Activated B cell treated with CpG ODN at 0.5 μM for 24 hours (primary cell): ENCODE measurements at regions of chr16 and their contacts with region 1.

Region 1: GRCh38 chr16:85821441-85822135 is 22.1 kb downstream of the COX4I1 start:
- DNase-seq: peak; percentile 88
- ATAC-seq: peak; percentile 93
- H3K4me3 Mint-ChIP-seq: no peak overlapping the region
- H3K27ac Mint-ChIP-seq: no peak overlapping the region
- H3K4me1 Mint-ChIP-seq: peaks cover 29% of the 10 kb centered on the region
- H3K27me3 Mint-ChIP-seq: no peaks in the 10 kb centered on the region
- CTCF ChIP-seq: peak; percentile 69

Region 2: GRCh38 chr16:85566561-85567100 is 255.0 kb before region 1 on chr16:
- CTCF ChIA-PET with region 1: no interaction called
- POLR2A ChIA-PET with region 1: no interaction called
- intact Hi-C with region 1: no loop called
- DNase-seq: no peak
- ATAC-seq: no peak
- H3K4me3 Mint-ChIP-seq: no peak overlapping the region
- H3K27ac Mint-ChIP-seq: no peak overlapping the region
- H3K4me1 Mint-ChIP-seq: peaks cover 74% of the 10 kb centered on the region
- H3K27me3 Mint-ChIP-seq: no peaks in the 10 kb centered on the region
- CTCF ChIP-seq: no peak

Region 3: GRCh38 chr16:85659805-85660495 is 161.6 kb before region 1 on chr16:
- CTCF ChIA-PET with region 1: interaction called, 10 read pairs
- POLR2A ChIA-PET with region 1: no interaction called
- intact Hi-C with region 1: no loop called
- DNase-seq: peak; percentile 70
- ATAC-seq: peak; percentile 97
- H3K4me3 Mint-ChIP-seq: no peak overlapping the region
- H3K27ac Mint-ChIP-seq: peak overlapping the region; percentile 67
- H3K4me1 Mint-ChIP-seq: no peaks in the 10 kb centered on the region
- H3K27me3 Mint-ChIP-seq: no peaks in the 10 kb centered on the region
- CTCF ChIP-seq: no peak

Region 4: GRCh38 chr16:85898521-85899442 is 77.2 kb after region 1 on chr16 and contains the start of gene IRF8:
- CTCF ChIA-PET with region 1: interaction called, 69 read pairs
- POLR2A ChIA-PET with region 1: interaction called, 18 read pairs
- intact Hi-C with region 1: loop called (anchors 1 kb)
- DNase-seq: peak; percentile 89
- ATAC-seq: peak; percentile 64
- H3K4me3 Mint-ChIP-seq: peak within 1 kb of the TSS; percentile 84
- H3K27ac Mint-ChIP-seq: peak within 1 kb of the TSS; percentile 95
- H3K4me1 Mint-ChIP-seq: peaks cover 63% of the 10 kb centered on the region
- H3K27me3 Mint-ChIP-seq: no peaks in the 10 kb centered on the region
- CTCF ChIP-seq: no peak
- total RNA-seq, gene IRF8: 234 and 248 TPM in 2 replicates

Region 5: DNA sequence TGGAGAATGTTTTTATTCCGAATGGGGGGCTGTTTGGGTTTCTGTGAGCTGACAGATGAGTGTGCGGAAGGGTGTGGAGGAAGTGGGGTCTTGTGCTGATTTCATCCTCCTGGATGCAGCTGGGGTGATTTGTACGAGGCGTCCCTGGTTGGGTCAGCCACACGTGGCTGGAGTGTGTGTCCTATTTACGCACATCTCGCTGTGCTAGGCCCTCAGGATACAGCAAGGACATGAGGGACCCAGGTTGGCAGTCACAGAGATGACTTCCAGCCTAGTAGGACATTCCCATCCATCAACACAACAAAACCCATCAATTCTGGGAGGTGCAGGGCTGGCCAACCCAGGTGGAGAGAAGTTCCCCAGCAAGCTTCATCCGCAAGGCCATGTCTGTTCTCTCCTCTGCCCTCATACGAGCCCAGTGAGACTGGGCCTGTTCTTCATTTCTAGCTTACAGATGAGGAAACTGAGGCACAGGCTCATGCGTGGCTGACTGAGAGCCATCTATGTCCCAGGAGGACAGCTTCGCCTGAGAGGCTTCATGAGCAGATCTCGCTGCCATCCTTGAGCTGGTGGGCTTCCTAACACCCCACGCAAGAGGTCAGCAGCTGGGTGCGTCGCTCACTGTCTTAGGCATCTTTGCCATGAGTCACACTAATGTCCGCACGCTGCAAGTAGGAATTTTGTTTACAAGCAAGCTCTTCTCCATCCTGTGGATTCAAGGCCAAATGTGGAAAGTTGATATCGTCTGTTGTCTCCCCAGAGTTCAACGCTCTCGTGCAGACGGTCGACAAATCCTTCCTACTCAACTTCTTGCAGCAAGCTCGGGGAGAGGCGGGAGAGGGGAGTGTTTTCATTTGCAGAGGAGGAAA is 101.8 kb after region 1 on chr16:
- CTCF ChIA-PET with region 1: interaction called, 33 read pairs
- POLR2A ChIA-PET with region 1: no interaction called
- intact Hi-C with region 1: loop called (anchors 1 kb)
- DNase-seq: no peak
- ATAC-seq: no peak
- H3K4me3 Mint-ChIP-seq: no peak overlapping the region
- H3K27ac Mint-ChIP-seq: peak overlapping the region; percentile 50
- H3K4me1 Mint-ChIP-seq: peaks cover 59% of the 10 kb centered on the region
- H3K27me3 Mint-ChIP-seq: no peaks in the 10 kb centered on the region
- CTCF ChIP-seq: no peak

Region 6: DNA sequence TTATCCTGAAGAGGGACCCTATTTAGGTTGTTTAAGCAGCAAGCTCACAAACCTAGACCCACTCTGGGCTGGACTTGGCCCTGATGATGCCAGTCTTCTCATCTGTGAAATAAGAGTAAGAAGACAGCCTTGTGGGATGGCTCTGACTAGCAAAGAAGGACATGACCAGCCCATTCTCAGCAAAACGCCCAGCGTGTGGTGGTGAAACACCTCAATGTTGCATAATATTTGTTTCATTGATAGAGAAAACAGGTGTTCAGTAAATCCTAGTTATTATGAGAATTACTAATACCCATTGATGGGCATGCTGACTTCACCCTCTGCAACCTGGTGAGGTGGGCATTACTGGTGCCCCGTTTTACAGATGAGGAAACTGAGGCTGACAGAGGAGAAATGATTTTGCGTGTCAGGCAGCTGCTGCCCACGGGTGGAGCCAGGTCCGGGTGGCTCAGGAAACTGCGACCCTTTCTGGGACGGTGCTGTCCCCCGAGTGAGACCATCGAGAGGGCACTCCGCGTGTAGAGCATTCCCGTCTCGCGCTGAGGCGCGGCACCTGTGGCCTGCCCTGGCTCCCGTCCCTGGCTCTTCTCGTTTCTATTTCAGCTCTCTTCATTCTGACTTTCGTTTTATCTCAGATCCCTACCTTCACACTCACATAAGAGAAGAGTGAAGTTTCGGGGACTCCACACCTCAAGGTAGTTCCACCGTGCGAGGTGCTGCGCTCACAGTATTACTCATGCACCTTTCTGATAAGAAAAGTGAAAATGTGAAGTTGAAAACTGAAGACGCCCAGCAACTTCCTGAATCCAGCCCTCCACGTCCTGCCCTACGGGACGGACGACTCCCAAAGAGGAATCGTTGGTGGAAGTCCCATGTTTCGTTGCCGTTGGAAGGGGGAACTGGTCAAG is 125.9 kb after region 1 on chr16:
- CTCF ChIA-PET with region 1: interaction called, 28 read pairs
- POLR2A ChIA-PET with region 1: interaction called, 5 read pairs
- intact Hi-C with region 1: no loop called
- DNase-seq: peak; percentile 51
- ATAC-seq: peak; percentile 79
- H3K4me3 Mint-ChIP-seq: peak overlapping the region; percentile 84
- H3K27ac Mint-ChIP-seq: peak overlapping the region; percentile 93
- H3K4me1 Mint-ChIP-seq: peaks cover 91% of the 10 kb centered on the region
- H3K27me3 Mint-ChIP-seq: no peaks in the 10 kb centered on the region
- CTCF ChIP-seq: no peak

Region 7: DNA sequence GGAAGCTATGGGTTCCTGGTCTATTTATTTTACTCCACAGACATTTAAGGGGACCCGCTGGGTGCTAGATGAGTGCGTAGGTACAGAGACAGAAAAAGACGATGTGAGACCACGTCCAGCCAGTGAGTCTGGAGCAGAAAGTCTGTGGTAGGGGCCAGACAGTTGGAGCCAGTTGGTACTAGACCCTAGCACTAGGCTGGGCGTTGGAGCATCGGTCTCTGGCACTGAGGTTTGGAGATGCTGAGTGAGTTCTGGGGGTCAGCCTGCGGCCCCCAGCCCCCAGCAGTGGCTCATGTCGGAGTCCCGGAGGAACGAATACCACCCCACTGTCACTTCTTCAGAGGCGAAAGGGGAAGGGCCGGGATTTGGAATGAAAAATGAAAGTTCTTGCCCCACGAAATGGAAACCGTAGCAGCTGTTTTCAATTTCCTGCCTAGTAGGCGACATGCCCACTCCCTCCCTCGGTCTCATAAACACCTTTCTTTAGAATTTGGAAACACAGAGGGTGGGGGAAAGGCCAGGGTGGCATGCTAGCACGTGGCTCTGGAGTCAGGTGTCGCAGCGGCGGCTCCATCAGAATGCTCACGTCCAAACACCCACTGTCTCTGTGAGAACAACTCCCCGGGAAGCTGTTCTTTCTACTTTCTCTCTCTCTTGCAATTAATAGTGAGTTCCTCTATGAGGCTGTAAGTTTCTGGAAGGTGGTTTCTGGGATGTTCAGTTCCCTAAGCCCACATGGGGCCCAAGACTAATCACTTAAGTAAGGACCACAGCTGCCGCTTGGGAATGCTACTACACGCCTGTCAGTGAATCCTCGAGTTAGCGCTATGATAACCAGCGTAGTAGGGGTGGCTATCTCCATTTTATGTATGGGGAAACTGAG is 174.2 kb after region 1 on chr16:
- CTCF ChIA-PET with region 1: interaction called, 296 read pairs
- POLR2A ChIA-PET with region 1: interaction called, 7 read pairs
- intact Hi-C with region 1: no loop called
- DNase-seq: peak; percentile 27
- ATAC-seq: peak; percentile 29
- H3K4me3 Mint-ChIP-seq: peak overlapping the region; percentile 78
- H3K27ac Mint-ChIP-seq: peak overlapping the region; percentile 84
- H3K4me1 Mint-ChIP-seq: peaks cover 89% of the 10 kb centered on the region
- H3K27me3 Mint-ChIP-seq: no peaks in the 10 kb centered on the region
- CTCF ChIP-seq: no peak

Region 8: DNA sequence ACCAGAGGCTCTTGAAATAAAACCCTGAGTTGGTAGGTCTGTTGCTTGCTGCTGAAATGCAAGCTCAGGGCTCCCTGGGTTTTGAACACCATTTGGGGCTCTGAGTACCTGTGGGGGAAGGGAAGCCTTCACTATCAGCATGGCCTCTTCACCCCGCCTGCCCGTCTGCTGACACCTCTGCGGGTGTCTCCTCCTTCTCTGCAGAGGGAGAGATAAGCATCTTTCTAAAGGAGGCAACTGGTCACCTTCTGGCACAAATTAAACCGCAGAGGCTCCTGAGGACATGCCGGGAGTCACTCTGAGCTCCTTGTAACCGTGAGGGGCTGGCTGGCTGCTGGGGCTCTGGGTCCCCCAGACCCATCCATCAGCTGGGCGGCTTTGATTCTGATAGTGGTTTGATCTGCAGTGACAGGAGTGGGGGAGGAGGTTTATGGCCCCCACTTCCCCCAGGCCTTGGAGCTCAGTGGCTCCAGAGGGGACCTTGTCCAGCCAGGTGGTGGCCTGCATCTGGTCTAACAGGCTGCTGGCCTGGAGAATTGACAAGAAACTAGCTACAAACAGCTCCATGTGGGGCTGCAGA is 200.9 kb after region 1 on chr16:
- CTCF ChIA-PET with region 1: interaction called, 232 read pairs
- POLR2A ChIA-PET with region 1: interaction called, 3 read pairs
- intact Hi-C with region 1: no loop called
- DNase-seq: peak; percentile 8
- ATAC-seq: no peak
- H3K4me3 Mint-ChIP-seq: no peak overlapping the region
- H3K27ac Mint-ChIP-seq: no peak overlapping the region
- H3K4me1 Mint-ChIP-seq: peaks cover 12% of the 10 kb centered on the region
- H3K27me3 Mint-ChIP-seq: peaks cover 8% of the 10 kb centered on the region
- CTCF ChIP-seq: no peak